ENCODE measurements at regions of chr22 and their contacts with region 1.

Region 1: GRCh38 chr22:41621099-41621910 is at the start of gene XRCC6:
- DNase-seq: peak; percentile 100
- H3K4me3 Mint-ChIP-seq: peak within 1 kb of the TSS; percentile 97
- H3K27ac Mint-ChIP-seq: peak within 1 kb of the TSS; percentile 98
- H3K4me1 Mint-ChIP-seq: peaks cover 40% of the 10 kb centered on the region
- H3K27me3 Mint-ChIP-seq: no peaks in the 10 kb centered on the region
- total RNA-seq, gene XRCC6: 403 to 409 TPM

Region 2: GRCh38 chr22:41468381-41469217 is 152.7 kb before region 1 on chr22 and contains the starts of genes ACO2 and PHF5A:
- CTCF ChIA-PET with region 1: no interaction called
- POLR2A ChIA-PET with region 1: interaction called, 13 read pairs
- intact Hi-C with region 1: loop called (anchors 1 kb)
- DNase-seq: peak; percentile 99
- H3K4me3 Mint-ChIP-seq: peak within 1 kb of the TSS; percentile 93
- H3K27ac Mint-ChIP-seq: peak within 1 kb of the TSS; percentile 99
- H3K4me1 Mint-ChIP-seq: peaks cover 51% of the 10 kb centered on the region
- H3K27me3 Mint-ChIP-seq: no peaks in the 10 kb centered on the region
- total RNA-seq, gene ACO2: 103 to 105 TPM
- total RNA-seq, gene PHF5A: 55.4 to 60.0 TPM

Region 3: DNA sequence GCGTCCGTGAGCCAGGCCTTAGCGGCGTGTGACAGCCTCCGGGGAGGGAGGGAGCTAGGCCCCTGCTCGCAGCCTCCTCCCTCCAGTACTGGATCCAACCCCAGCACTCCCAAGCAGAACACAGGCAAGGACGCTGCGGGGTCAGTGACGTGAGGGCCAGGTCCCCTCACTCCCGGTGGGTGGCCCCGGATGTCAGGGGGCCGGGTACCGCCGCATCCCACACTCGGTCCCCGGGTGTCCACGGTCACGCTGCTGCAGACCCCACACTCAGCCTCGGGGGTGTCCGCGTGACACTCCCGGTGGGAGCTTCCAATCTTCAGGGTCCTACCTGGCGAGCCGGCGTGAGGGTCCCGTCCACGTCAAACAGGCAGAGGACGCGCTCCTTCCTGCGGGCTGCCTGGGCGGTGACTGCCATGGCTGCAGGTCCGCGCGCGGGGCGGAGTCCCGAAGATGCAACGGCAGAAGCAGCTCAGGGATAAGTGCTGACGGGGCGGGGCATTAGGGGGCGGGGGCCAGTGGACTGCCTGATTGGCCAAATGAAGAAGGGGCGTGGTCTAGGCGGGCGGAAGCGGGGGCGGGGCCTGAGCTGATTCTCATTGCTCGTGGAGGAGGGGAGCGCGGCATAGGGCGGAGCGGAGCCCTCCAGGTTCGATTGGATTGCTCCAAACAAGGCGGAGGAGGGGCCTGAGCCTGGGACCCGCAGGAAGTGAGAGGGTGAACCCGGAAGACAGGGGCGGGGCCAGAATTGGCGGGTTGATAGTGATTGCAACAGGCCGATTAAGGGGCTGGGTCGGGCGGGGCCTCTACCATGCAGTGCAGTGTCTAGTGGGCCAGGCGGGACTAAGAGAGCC is 31.7 kb before region 1 on chr22 and contains the start of gene PMM1:
- CTCF ChIA-PET with region 1: interaction called, 13 read pairs
- POLR2A ChIA-PET with region 1: interaction called, 65 read pairs
- intact Hi-C with region 1: loop called (anchors 1 kb)
- DNase-seq: peak; percentile 100
- H3K4me3 Mint-ChIP-seq: peak within 1 kb of the TSS; percentile 94
- H3K27ac Mint-ChIP-seq: peak within 1 kb of the TSS; percentile 81
- H3K4me1 Mint-ChIP-seq: peaks cover 12% of the 10 kb centered on the region
- H3K27me3 Mint-ChIP-seq: no peaks in the 10 kb centered on the region
- total RNA-seq, gene PMM1: 45.1 to 46.4 TPM

Region 4: DNA sequence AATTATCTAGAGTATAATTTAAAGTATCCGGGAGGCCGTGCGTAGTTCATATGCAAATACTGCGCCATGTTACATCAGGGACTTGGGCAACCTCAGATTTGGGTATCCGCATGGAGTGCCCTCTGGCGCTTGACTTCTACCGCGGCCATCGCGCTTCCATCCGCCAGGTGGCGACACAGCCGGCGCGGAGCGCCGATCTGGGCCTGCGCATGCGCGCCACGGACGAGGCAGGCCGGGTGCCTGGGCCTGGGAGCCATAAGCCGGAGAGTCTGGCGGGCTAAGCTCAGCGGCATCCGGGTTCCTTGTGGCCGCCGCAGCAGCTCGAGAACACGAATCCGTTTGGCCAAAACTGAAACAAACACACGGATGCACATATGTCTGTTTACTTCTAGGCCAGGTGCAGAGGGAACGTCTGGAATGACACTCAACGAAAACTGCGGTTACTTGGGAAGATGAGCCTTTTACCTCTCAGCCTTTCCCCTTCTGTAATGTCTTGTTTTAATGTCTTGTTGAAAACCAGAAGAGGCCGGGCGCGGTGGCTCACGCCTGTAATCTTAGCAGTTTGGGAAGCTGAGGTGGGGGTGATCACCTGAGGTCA is 45.5 kb after region 1 on chr22:
- CTCF ChIA-PET with region 1: interaction called, 18 read pairs
- POLR2A ChIA-PET with region 1: interaction called, 4 read pairs
- intact Hi-C with region 1: loop called (anchors 2 kb)
- DNase-seq: peak; percentile 97
- H3K4me3 Mint-ChIP-seq: peak overlapping the region; percentile 86
- H3K27ac Mint-ChIP-seq: peak overlapping the region; percentile 97
- H3K4me1 Mint-ChIP-seq: peaks cover 13% of the 10 kb centered on the region
- H3K27me3 Mint-ChIP-seq: no peaks in the 10 kb centered on the region

Region 5: DNA sequence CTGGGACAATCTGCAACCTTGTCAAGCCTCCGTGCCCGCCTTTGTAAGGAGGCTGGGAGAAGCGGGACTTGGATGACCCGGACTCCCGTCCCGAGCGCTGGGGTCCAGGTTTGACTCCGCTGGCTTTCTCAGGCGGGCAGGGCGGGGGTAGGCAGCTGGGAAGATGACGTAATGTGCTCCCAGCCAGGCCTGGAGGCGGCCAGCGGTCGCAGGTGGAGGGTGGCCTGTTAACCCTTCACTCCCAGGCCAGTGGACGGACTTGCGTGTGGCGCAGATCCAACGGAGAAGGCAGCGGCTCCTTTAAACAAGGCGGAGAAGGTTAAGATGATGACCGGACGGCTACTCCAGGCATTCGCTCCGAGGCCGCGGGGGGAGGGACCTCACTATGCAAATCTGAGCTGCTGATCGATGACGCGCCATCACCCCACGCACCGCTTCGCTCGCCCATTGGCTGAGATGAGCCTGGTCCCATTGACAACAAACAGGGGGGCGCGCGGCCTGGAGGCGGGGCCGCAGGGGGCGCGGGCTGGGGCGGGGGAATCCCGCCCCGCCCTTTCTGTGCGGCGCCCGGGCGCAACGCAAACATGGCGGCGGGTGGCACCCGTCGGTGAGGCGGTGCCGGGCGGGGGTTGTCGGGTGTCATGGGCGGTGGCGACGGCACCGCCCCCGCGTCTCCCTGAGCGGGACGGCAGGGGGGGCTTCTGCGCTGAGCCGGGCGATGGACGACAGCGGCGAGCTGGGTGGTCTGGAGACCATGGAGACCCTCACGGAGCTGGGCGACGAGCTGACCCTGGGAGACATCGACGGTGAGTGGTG is 211.5 kb after region 1 on chr22 and contains the start of gene SREBF2:
- CTCF ChIA-PET with region 1: no interaction called
- POLR2A ChIA-PET with region 1: no interaction called
- intact Hi-C with region 1: loop called (anchors 1 kb)
- DNase-seq: peak; percentile 100
- H3K4me3 Mint-ChIP-seq: peak within 1 kb of the TSS; percentile 98
- H3K27ac Mint-ChIP-seq: peak within 1 kb of the TSS; percentile 99
- H3K4me1 Mint-ChIP-seq: peaks cover 44% of the 10 kb centered on the region
- H3K27me3 Mint-ChIP-seq: no peaks in the 10 kb centered on the region
- total RNA-seq, gene SREBF2: 131 to 137 TPM

Measured in activated CD4-positive, alpha-beta memory T cell treated with anti-CD3 and anti-CD28 coated beads for 36 hours (primary cell).